ENCODE measurements at regions of chr12 and their contacts with region 1.

Region 1: GRCh38 chr12:49232940-49233841 is 31.7 kb upstream of the TUBA1C start:
- DNase-seq: peak; percentile 81
- ATAC-seq: peak; percentile 81

Region 2: DNA sequence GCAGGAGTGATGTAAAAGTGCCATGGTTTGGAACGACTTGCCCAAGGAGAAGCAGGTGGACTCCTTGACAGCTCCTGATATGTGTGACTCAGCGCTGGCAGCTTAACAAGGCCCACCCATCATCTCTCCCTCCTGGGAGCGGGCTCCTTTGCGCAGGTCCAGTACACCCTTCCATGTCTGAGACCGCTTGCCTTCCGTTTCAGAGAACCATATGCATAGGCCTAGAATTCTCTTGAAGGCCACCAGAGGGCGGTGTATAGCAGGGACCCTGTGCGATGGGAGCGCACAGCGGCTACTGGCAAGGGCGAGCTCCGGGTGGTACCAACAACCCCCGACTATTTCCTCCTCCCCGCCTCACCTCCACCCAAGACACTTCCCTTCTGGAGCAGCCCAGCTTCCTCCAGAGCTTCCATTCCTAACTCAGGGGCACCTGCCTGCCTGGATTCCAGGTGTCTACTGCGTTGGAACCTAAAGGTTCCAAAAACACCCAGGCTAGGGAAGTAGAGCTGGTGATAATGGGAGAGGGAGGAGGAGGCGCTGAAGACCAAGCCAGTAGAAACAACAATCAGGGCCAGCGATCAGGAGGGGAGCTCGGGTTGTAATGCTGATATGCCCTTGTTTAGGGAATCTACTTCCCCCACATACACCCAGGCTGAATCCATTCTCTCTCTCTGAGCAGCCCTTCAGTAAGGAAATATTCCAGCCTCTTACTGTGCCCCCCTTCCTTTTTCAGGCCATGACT is 144.8 kb before region 1 on chr12:
- intact Hi-C with region 1: loop called (anchors 5 kb)
- DNase-seq: peak; percentile 66
- ATAC-seq: peak; percentile 95

Region 3: DNA sequence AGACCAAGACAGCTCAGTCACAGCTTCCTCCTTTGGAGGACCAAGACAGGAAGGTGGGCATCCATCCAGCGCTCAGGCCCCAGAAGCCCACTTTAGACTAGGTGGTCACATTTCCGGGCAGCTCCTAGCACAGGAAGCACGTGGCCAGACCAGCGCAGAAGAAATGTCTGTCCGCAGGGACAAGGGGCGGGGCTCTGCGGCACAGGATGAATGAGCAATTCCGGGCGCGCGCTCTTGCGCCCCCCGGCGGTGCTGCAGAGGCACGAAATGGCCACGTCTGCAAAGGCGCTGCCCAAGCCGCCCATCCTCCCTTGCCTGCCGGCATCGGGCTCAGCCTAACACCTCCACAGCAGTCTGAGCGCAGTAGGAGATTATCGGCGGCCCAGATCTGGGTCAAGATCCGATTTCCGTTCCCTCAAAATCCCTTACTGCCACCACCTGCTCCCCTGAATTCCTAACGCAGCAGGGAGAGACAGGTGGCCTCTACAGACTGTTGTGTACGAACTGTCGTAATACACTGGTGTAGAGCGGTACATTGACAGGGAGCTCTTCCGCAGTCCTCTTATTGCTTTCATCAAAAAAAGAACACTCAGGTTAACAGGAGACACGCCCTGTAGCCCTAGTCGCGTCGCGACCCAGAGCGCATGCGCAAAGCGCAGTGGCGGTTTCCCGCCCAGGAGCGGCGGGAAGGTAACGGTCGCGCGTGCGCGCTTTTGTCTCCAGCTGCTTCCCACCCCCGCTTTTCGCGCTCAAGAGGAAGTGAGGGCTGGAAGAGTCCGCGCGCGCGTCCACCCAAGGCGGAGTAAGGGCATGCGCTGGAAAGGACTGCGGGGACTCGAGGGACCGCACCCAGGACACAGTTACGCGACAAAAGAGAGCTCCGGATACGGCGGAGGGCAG is 102.8 kb before region 1 on chr12:
- intact Hi-C with region 1: loop called (anchors 5 kb)
- DNase-seq: peak; percentile 97
- ATAC-seq: peak; percentile 88

Region 4: DNA sequence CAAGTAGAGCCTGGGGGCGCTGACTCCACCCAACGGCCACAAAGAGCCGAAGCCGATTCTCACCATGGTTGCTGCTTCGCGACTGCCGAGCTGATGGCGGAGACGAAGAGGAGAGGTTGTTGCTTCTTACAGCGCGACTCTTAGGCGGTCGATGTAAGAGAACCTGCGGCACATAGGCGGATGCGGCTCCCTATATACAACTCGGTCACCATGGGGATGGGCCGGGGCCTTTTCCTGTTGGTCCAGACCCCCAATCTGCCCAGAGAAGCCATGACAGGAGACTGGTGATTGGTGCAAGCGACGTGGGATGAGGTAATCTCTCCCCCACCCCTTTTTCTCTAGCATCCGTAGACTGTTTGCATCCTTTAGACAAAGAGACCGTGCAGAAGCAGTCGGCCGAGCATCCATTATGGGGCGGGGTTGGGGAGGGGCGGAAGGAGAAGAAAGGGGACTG is 44.2 kb before region 1 on chr12 and contains the start of gene TUBA1A:
- intact Hi-C with region 1: loop called (anchors 2 kb)
- DNase-seq: peak; percentile 96
- ATAC-seq: peak; percentile 86
- total RNA-seq, gene TUBA1A: 88.1 TPM

Measured in Right ventricle myocardium superior (tissue), 1 donor.